ENCODE measurements at regions of chr12 and their contacts with region 1.

Region 1: DNA sequence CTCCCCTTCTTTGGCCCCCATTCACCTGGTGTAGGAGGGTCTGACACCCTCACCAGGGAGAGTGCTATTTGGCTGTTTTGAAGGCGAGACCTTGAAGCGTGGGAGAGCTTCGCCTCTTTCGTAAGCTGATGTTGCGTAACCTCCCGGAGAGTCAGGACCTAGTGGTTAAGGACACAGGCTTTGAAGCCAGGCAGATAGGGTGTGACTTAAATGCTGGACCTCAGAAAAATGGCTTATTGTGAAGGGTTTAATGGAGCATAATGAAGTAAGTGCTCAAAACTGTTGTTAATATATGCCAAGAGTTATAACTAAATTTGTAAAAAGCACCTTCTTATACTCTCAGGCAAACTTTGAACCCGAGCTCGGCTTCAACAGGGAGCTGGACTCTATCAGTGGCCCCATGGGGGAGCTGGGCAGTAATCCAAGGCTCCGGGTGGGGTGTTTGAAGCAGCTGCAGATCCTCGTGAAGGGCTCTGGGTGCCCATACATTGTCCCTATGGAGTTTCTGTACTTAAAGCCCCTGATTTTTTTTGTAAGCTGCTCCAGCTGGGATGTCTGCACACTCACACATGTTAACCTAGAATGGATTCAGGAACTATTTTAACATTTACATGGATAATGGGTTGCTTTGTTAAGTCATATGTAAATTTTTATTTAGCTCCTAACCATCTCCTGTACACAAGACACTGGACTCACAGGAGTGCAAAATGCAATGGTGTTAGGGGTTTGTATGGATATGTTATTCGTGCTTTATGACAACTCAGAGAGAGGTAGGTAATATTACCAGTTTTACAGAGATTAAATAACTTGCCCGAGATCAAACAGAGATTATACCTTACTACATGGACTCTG is 26.0 kb downstream of the PPFIBP1 start:
- DNase-seq: peak; percentile 89
- H3K4me3 ChIP-seq: peak overlapping the region in 1 of 3 experiments; percentile 20
- H3K27ac ChIP-seq: peak overlapping the region; percentile 79
- H3K4me1 ChIP-seq: peaks cover 66% of the 10 kb centered on the region
- H3K27me3 ChIP-seq: no peaks in the 10 kb centered on the region
- CTCF ChIP-seq: no peak
- POLR2A ChIP-seq: no peak

Region 2: GRCh38 chr12:26434299-26435068 is 1115.5 kb before region 1 on chr12:
- CTCF ChIA-PET with region 1: no interaction called
- POLR2A ChIA-PET with region 1: no interaction called
- dilution Hi-C with region 1: no loop called
- intact Hi-C with region 1: no loop called
- DNase-seq: peak; percentile 69
- H3K4me3 ChIP-seq: no peak overlapping the region
- H3K27ac ChIP-seq: no peak overlapping the region
- H3K4me1 ChIP-seq: no peaks in the 10 kb centered on the region
- H3K27me3 ChIP-seq: no peaks in the 10 kb centered on the region
- CTCF ChIP-seq: peak; percentile 62 to 73
- POLR2A ChIP-seq: no peak

Region 3: DNA sequence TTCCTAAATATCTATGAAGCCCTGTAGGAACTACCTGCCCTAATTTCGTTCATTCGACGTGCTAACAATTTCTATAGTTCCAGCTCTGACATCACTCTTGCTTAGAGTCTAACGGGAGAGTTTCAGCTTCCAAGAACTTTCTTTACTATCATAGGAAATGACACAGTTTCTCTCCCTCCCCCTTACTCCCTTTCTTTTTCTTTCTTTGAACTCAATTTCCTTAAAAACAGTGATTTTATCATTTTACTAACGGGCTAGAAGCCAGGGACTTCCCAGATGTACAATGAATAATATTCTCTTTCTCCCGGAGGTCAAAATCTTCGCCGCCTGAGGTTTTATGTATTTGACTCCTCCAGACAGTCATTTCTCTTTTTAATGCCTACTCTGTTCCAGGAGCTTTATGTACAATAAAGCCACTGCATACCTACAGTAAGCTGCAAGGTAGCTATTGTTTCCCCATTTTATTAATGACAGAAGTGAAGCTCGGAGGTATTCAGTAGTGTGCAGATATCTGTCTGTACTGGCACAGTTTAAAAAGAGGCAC is 87.8 kb before region 1 on chr12:
- CTCF ChIA-PET with region 1: interaction called, 8 read pairs
- POLR2A ChIA-PET with region 1: interaction called, 3 read pairs
- dilution Hi-C with region 1: no loop called
- intact Hi-C with region 1: loop called (anchors 1 kb)
- DNase-seq: peak; percentile 97
- H3K4me3 ChIP-seq: peak overlapping the region in 1 of 3 experiments; percentile 33
- H3K27ac ChIP-seq: peak overlapping the region; percentile 88
- H3K4me1 ChIP-seq: peaks cover 40% of the 10 kb centered on the region
- H3K27me3 ChIP-seq: no peaks in the 10 kb centered on the region
- CTCF ChIP-seq: no peak
- POLR2A ChIP-seq: peak; percentile 29

Region 4: DNA sequence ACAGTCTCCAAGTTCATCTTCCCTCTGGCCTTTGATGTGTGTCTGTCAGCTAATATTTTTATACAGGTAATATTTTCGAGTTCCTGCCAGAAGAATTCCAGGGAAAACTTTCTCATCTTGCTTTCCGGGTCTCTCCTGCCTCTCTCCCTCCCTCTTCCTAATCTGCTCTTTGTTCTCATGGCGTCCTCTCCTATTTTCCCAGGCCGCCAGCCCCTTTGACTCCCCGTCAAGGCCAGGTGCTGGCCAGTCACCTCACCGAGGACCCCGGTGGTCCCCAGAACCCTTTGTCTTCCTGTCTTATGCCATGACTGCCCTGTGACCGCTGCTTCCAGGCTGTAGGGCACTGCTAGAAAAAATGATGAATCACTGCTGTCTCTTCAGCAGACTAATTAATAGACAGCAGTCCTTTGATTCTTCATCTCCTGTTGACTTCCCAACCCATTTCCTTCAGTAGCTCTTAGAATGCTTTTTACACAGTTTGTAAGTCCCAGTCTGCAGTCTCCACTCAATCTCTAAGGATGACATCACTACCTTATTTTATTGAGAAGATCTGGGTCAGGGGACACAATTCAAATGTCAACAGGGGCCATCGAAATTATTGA is 14.7 kb after region 1 on chr12:
- CTCF ChIA-PET with region 1: interaction called, 16 read pairs
- POLR2A ChIA-PET with region 1: no interaction called
- dilution Hi-C with region 1: no loop called
- intact Hi-C with region 1: no loop called
- DNase-seq: peak; percentile 67
- H3K4me3 ChIP-seq: no peak overlapping the region
- H3K27ac ChIP-seq: peak overlapping the region; percentile 63
- H3K4me1 ChIP-seq: peaks cover 34% of the 10 kb centered on the region
- H3K27me3 ChIP-seq: no peaks in the 10 kb centered on the region
- CTCF ChIP-seq: no peak
- POLR2A ChIP-seq: no peak

Region 5: GRCh38 chr12:27573972-27574371 is 23.9 kb after region 1 on chr12:
- CTCF ChIA-PET with region 1: interaction called, 8 read pairs
- POLR2A ChIA-PET with region 1: interaction called, 7 read pairs
- dilution Hi-C with region 1: no loop called
- intact Hi-C with region 1: loop called (anchors 2 kb)
- DNase-seq: peak; percentile 92
- H3K4me3 ChIP-seq: no peak overlapping the region
- H3K27ac ChIP-seq: peak overlapping the region; percentile 92
- H3K4me1 ChIP-seq: peaks cover 76% of the 10 kb centered on the region
- H3K27me3 ChIP-seq: no peaks in the 10 kb centered on the region
- CTCF ChIP-seq: no peak
- POLR2A ChIP-seq: no peak

Region 6: DNA sequence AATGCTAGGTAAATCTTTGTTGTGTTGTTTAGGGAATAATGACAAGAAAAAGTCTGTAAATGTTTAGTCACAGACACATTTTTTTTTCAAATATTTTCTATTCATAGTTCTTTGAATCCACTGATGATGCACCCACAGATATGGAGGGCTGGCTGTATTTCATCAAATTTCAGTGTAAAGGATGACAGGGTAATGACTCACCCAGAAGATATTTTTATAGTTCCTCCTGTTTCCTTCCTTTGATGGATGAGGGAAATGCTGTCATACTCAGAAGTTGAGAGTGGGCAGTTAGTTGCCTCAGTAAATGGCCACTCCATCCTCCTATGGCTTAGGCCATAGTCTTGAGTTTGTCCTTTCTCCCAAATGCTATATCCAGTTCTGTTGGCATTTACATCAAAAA is 69.3 kb after region 1 on chr12:
- CTCF ChIA-PET with region 1: interaction called, 6 read pairs
- POLR2A ChIA-PET with region 1: no interaction called
- dilution Hi-C with region 1: no loop called
- intact Hi-C with region 1: loop called (anchors 2 kb)
- DNase-seq: peak; percentile 87
- H3K4me3 ChIP-seq: no peak overlapping the region
- H3K27ac ChIP-seq: peak overlapping the region; percentile 71
- H3K4me1 ChIP-seq: peaks cover 76% of the 10 kb centered on the region
- H3K27me3 ChIP-seq: no peaks in the 10 kb centered on the region
- CTCF ChIP-seq: no peak
- POLR2A ChIP-seq: peak; percentile 51